ENCODE measurements at regions of chr9 and their contacts with region 1.

Region 1: GRCh38 chr9:6353851-6354686 is 25.9 kb downstream of the TPD52L3 start:
- DNase-seq: no peak

Region 2: DNA sequence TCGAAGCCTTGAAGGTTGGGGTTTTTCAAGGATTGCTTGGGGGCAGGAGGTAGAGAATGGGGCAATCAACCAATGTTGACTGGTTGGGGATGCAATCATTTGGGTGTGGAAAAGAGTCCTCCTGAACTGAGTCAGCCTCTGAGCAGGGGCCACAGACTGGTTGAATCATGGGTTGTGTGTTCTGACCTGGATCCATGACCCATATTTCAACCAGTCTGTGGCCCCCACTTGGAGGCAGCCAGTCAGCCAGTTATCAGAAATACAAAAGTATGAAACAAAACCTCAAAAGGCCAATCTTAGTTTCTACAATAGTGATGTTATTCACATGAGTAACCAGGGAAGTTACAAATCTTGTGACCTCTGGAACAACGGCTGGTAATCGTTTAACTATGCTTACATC is 257.2 kb before region 1 on chr9:
- intact Hi-C with region 1: no loop called
- DNase-seq: no peak

Region 3: GRCh38 chr9:6566409-6567139 is 212.5 kb after region 1 on chr9:
- intact Hi-C with region 1: loop called (anchors 5 to 10 kb)
- DNase-seq: peak; percentile 88

Region 4: GRCh38 chr9:6667633-6668280 is 313.7 kb after region 1 on chr9:
- intact Hi-C with region 1: loop called in 1 of 2 experiments (anchors 10 kb)
- DNase-seq: no peak